ENCODE measurements at regions of chr6 and their contacts with region 1.

Region 1: GRCh38 chr6:132813173-132813856 is 1.1 kb upstream of the RPS12 start:
- DNase-seq: peak; percentile 52
- ATAC-seq: peak; percentile 26

Region 2: GRCh38 chr6:132512638-132513632 is 300.4 kb before region 1 on chr6 and contains the start of gene STX7:
- intact Hi-C with region 1: loop called (anchors 10 kb)
- DNase-seq: peak; percentile 95
- ATAC-seq: peak; percentile 99
- total RNA-seq, gene STX7: 55.1 TPM

Region 3: DNA sequence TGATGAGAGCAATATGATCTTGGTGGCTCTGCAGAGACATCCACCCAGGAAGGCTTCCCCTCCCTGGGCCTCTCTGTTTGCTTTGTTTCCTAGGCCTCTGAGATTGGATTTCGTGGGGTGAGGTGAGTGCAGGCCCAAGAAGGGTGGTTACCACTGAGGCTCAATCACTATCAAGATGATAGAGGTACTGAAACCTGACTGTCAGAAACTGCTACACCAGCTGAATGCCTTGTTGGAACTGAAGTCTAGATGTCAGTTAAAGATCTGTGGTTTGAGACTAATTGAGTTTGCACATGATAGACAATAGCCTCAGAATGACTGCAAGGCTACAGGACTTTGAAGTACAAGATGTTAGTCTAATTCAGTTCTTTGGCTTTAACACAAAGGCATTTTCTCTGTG is 114.7 kb before region 1 on chr6:
- intact Hi-C with region 1: no loop called
- DNase-seq: no peak
- ATAC-seq: no peak

Measured in Right ventricle myocardium superior (tissue), 1 donor.